ENCODE measurements at regions of chr1 and their contacts with region 1.

Region 1: GRCh38 chr1:55131801-55132200 is 83.4 kb downstream of the USP24 start:
- DNase-seq: no peak
- ATAC-seq: no peak
- H3K4me3 ChIP-seq: no peak overlapping the region
- H3K4me3 Mint-ChIP-seq: no peak overlapping the region
- H3K27ac ChIP-seq: no peak overlapping the region
- H3K27ac Mint-ChIP-seq: no peak overlapping the region
- H3K4me1 ChIP-seq: no peaks in the 10 kb centered on the region
- H3K4me1 Mint-ChIP-seq: peaks cover 9% of the 10 kb centered on the region
- H3K27me3 ChIP-seq: no peaks in the 10 kb centered on the region
- H3K27me3 Mint-ChIP-seq: no peaks in the 10 kb centered on the region
- CTCF ChIP-seq: no peak

Region 2: GRCh38 chr1:55164906-55165305 is 33.1 kb after region 1 on chr1:
- CTCF ChIA-PET with region 1: no interaction called
- POLR2A ChIA-PET with region 1: no interaction called
- intact Hi-C with region 1: loop called (anchors 5 kb)
- DNase-seq: no peak
- ATAC-seq: peak; percentile 21
- H3K4me3 ChIP-seq: no peak overlapping the region
- H3K4me3 Mint-ChIP-seq: no peak overlapping the region
- H3K27ac ChIP-seq: no peak overlapping the region
- H3K27ac Mint-ChIP-seq: peak overlapping the region; percentile 32
- H3K4me1 ChIP-seq: no peaks in the 10 kb centered on the region
- H3K4me1 Mint-ChIP-seq: peaks cover 3% of the 10 kb centered on the region
- H3K27me3 ChIP-seq: no peaks in the 10 kb centered on the region
- H3K27me3 Mint-ChIP-seq: no peaks in the 10 kb centered on the region
- CTCF ChIP-seq: no peak